Ovary (tissue), 10 donors: ENCODE measurements at regions of chr9 and their contacts with region 1.

Region 1: GRCh38 chr9:70614786-70615463 is 200.5 kb upstream of the KLF9 start:
- DNase-seq: no peak
- H3K4me3 ChIP-seq: no peak overlapping the region
- H3K27ac ChIP-seq: no peak overlapping the region
- H3K4me1 ChIP-seq: no peaks in the 10 kb centered on the region
- H3K27me3 ChIP-seq: no peaks in the 10 kb centered on the region
- CTCF ChIP-seq: no peak
- EP300 ChIP-seq: no peak
- POLR2A ChIP-seq: no peak

Region 2: DNA sequence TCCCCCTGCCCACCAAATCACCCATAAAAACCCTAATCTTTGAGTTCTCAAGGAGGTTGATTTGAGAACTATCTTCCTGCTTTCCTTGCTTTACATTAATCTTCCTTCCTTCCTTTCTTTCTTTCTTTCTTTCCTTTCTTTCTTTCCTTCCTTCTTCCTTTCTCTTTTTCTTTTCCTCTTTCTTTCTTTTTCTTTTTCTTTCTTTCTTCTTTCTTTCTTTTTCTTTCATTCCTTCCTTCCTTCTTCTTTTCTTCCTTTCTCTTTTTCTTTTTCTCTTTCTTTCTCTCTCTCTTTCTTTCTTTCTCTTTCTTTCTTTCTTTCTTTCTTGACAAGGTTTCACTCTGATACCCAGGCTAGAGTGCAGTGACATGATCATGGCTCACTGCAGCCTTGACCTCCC is 1220.7 kb after region 1 on chr9:
- intact Hi-C with region 1: loop called in 1 of 4 experiments (anchors 5 kb)
- DNase-seq: no peak
- H3K4me3 ChIP-seq: no peak overlapping the region
- H3K27ac ChIP-seq: no peak overlapping the region
- H3K4me1 ChIP-seq: no peaks in the 10 kb centered on the region
- H3K27me3 ChIP-seq: no peaks in the 10 kb centered on the region
- CTCF ChIP-seq: no peak
- EP300 ChIP-seq: no peak
- POLR2A ChIP-seq: no peak